ENCODE measurements at regions of chr10 and their contacts with region 1.

Region 1: DNA sequence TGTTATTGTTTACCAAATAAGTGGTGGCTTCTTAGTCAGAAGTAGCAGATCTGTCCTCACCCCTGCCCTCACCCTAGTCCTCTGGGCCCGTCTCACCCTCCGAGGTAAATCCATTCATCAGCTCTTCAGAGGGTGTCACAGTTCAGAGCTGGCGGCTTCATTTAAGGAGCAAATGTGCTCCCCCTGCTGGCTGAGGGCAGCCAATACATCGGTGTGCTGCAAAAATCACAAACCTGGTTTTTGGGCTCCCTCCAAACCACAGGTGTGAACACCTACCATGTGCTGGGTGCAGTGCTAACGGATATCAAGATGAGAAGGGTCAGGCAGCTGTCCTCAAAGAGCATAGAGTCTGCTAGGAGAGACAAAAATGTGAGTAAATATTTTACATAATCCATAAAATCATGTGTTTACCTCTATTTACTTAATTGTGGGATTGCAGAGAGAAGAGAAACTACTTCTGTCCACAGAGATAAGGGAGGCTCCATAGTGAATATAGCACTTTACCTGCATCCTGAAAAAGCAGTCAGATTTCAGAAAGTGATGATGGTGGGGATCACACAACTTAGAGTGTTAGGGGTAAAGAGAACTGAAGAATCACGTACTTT is 15.5 kb upstream of the CRTAC1 start:
- DNase-seq: peak; percentile 72
- H3K4me3 ChIP-seq: no peak overlapping the region; a peak in 1 of 4 replicates
- H3K27ac ChIP-seq: no peak overlapping the region
- H3K4me1 ChIP-seq: peaks cover 0 to 2% of the 10 kb centered on the region in 2 experiments; a peak in 1 of 4 replicates
- H3K27me3 ChIP-seq: peaks cover 5% of the 10 kb centered on the region; the same call in 1 of the 2 replicates
- CTCF ChIP-seq: peak; percentile 91
- EP300 ChIP-seq: no peak
- RAD21 ChIP-seq: peak; percentile 66

Region 2: DNA sequence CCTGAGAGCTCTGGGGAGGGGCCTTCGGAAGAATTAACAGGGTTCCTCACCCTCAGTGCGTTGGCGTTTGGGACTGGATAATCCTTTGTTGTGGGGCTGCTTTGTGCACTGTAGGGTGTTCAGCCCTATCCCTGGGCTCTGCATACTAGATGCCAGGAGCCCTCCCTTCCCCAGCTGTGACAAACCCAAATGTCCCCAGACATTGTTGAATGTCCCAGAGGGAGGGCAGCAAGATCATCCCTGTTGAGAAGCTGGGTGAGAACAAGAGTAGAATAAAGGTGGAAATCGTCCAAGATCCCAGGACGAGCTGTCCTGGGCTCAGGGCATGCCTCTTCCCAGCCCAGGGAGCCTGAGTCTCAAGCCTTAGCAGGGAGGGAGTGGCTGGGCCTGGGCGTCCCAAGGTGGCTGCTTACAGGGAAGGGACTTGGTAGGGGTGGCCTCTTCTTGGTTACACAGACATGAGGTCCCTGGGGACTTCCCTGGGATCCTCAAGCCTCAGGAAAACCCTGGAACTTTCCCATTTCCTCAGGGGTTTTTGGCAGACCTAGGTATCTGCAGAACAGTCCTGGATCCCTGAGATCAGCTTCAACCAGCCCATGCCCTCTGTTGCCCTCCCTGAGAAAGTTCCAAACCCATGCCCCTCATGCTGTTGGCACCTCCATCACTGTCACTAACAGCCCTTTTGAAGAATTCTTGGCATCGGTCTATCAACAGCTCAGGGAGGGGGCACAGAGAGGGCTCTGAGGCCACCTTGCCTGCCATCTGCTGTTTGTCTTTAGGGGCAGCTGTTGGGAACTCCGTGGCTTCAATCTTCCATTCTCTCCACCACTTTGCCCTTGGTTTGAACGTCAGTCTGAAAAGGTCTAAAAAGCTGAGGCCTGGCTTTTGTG is 142.5 kb before region 1 on chr10:
- CTCF ChIA-PET with region 1: interaction called, 26 read pairs
- POLR2A ChIA-PET with region 1: no interaction called
- DNase-seq: no peak
- H3K4me3 ChIP-seq: no peak overlapping the region
- H3K27ac ChIP-seq: no peak overlapping the region
- H3K4me1 ChIP-seq: peaks cover 0 to 12% of the 10 kb centered on the region in 2 experiments; a peak in 1 of 4 replicates
- H3K27me3 ChIP-seq: peaks cover 9% of the 10 kb centered on the region; the same call in 1 of the 2 replicates
- CTCF ChIP-seq: no peak
- EP300 ChIP-seq: no peak
- RAD21 ChIP-seq: no peak; the same call in 1 of the 2 replicates

Region 3: GRCh38 chr10:98006266-98006665 is 39.6 kb before region 1 on chr10:
- CTCF ChIA-PET with region 1: interaction called, 15 read pairs
- POLR2A ChIA-PET with region 1: no interaction called
- DNase-seq: peak; percentile 55
- H3K4me3 ChIP-seq: no peak overlapping the region
- H3K27ac ChIP-seq: no peak overlapping the region
- H3K4me1 ChIP-seq: peaks cover 0 to 4% of the 10 kb centered on the region in 2 experiments; a peak in 2 of 4 replicates
- H3K27me3 ChIP-seq: no peaks in the 10 kb centered on the region
- CTCF ChIP-seq: no peak
- EP300 ChIP-seq: peak in 1 of 2 experiments; percentile 38; a peak in 1 of 4 replicates
- RAD21 ChIP-seq: no peak

Region 4: DNA sequence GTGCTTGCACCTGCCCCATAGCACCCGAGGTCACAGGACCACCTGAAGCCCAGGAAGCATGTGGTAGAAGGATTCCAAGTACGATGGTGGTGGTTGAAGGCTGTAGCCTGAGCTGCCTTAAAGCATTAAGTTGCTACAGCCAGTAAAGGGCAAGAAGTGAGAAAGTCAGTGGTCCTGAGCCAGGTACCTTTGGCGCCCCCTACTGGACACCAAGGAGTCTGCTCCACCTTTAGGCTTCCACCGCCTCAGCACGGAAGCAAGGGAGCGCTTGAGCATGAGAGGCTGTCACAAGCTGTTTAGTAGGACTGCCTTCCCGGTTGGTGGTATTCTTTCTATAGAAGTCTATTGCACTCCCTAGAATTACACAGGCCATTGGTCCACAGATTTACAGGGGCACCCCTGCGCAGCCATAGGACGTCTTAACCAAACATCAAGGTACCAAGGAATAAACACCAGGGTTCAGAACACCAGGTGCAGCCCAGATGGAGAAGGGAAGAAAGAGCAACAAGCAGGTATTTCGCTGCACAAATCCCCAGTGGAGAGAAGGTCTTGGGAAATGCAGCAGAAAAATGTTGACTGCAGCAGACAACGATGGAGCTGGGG is 17.6 kb before region 1 on chr10:
- CTCF ChIA-PET with region 1: interaction called, 176 read pairs
- POLR2A ChIA-PET with region 1: interaction called, 8 read pairs
- DNase-seq: peak; percentile 75
- H3K4me3 ChIP-seq: peak overlapping the region in 1 of 2 experiments; percentile 36; a peak in 1 of 4 replicates
- H3K27ac ChIP-seq: no peak overlapping the region
- H3K4me1 ChIP-seq: peaks cover 0 to 8% of the 10 kb centered on the region in 2 experiments; a peak in 1 of 4 replicates
- H3K27me3 ChIP-seq: peaks cover 27% of the 10 kb centered on the region
- CTCF ChIP-seq: peak; percentile 63
- EP300 ChIP-seq: no peak
- RAD21 ChIP-seq: peak; percentile 53

Region 5: GRCh38 chr10:98062424-98062823 is 16.5 kb after region 1 on chr10:
- CTCF ChIA-PET with region 1: interaction called, 14 read pairs
- POLR2A ChIA-PET with region 1: no interaction called
- DNase-seq: no peak
- H3K4me3 ChIP-seq: no peak overlapping the region
- H3K27ac ChIP-seq: no peak overlapping the region
- H3K4me1 ChIP-seq: no peaks in the 10 kb centered on the region; a peak in 1 of 4 replicates
- H3K27me3 ChIP-seq: no peaks in the 10 kb centered on the region
- CTCF ChIP-seq: no peak
- EP300 ChIP-seq: no peak
- RAD21 ChIP-seq: no peak

Region 6: GRCh38 chr10:98115031-98115787 is 69.3 kb after region 1 on chr10:
- CTCF ChIA-PET with region 1: no interaction called
- POLR2A ChIA-PET with region 1: no interaction called
- DNase-seq: no peak
- H3K4me3 ChIP-seq: no peak overlapping the region
- H3K27ac ChIP-seq: no peak overlapping the region
- H3K4me1 ChIP-seq: no peaks in the 10 kb centered on the region
- H3K27me3 ChIP-seq: peaks cover 14% of the 10 kb centered on the region; the same call in 1 of the 2 replicates
- CTCF ChIP-seq: no peak
- EP300 ChIP-seq: no peak
- RAD21 ChIP-seq: no peak

Region 7: DNA sequence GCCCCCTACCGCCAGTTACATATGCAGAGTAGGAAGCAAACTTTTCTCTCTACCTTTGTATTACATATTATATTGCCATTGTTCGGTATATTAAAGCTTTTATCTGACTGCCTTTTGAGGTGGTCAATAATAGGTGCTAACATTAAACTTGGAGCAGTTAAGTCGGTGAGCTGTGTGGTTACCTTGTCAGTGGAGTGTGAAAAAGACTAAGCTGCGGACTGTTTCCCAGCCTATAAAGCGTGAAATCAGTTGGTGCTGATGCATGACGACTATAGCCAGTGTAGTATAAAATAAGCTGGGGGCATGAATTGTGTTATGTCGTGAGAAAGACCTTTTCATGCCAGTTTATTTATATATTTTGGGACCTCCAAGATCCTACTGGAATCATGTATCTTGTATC is 122.3 kb after region 1 on chr10:
- CTCF ChIA-PET with region 1: no interaction called
- POLR2A ChIA-PET with region 1: no interaction called
- DNase-seq: no peak
- H3K4me3 ChIP-seq: no peak overlapping the region
- H3K27ac ChIP-seq: no peak overlapping the region
- H3K4me1 ChIP-seq: no peaks in the 10 kb centered on the region
- H3K27me3 ChIP-seq: no peaks in the 10 kb centered on the region
- CTCF ChIP-seq: no peak
- EP300 ChIP-seq: no peak
- RAD21 ChIP-seq: no peak

Region 8: DNA sequence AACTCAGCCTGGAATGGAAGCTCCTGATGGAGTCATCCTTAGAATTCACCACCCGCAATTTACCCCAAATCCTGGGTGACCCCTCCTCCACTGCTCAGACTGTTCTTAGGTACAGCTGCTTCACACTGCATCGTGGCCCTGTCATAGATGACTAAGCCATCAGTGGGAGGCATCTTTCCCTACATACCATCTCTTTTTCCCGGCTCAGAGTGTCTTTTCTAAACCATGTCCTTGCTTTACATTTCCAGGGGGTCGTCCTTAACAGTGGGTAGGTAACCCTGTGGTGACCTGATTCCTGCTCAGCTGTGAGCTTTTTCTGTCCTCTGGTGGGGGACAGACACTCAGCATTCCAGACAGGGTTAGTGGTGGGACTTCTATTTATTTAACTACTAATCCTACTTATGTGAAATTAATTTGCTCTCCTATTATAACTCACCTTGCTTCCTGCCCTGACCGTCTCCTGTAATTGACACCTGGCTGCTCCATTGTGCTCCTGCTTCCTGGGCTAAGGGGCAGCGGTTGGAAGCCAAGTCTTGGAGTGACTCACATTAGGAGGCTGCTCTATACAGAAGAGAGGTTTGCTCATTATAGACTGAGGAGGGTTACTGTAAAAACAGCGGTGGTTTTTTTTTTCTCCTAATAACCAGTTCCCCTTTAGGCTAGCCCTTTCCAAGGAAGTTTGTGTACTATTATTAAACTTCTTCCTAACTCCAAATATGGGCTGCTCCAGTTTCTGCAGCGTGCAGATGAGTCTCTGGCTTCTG is 328.5 kb after region 1 on chr10:
- CTCF ChIA-PET with region 1: no interaction called
- POLR2A ChIA-PET with region 1: no interaction called
- DNase-seq: no peak
- H3K4me3 ChIP-seq: no peak overlapping the region
- H3K27ac ChIP-seq: 0 out of 4 replicates have a peak overlapping the region, but pooled peaks of 1 of the 2 experiments have one; percentile 25
- H3K4me1 ChIP-seq: peaks cover 8 to 23% of the 10 kb centered on the region in 2 experiments; a peak in 3 of 4 replicates
- H3K27me3 ChIP-seq: no peaks in the 10 kb centered on the region
- CTCF ChIP-seq: no peak
- EP300 ChIP-seq: no peak
- RAD21 ChIP-seq: no peak

Measured in SK-N-SH (cell line).